A673 (cell line): ENCODE measurements at regions of chr4 and their contacts with region 1.

Region 1: GRCh38 chr4:168837922-168838321 is 172.1 kb downstream of the CBR4 start:
- DNase-seq: no peak
- H3K4me3 ChIP-seq: no peak overlapping the region
- H3K27ac ChIP-seq: no peak overlapping the region
- H3K4me1 ChIP-seq: peaks cover 10% of the 10 kb centered on the region
- H3K27me3 ChIP-seq: no peaks in the 10 kb centered on the region
- CTCF ChIP-seq: no peak

Region 2: GRCh38 chr4:168847771-168848511 is 10.0 kb after region 1 on chr4:
- CTCF ChIA-PET with region 1: no interaction called
- POLR2A ChIA-PET with region 1: interaction called, 13 read pairs
- intact Hi-C with region 1: no loop called
- DNase-seq: peak; percentile 29
- H3K4me3 ChIP-seq: peak overlapping the region; percentile 18
- H3K27ac ChIP-seq: peak overlapping the region; percentile 59
- H3K4me1 ChIP-seq: peaks cover 32% of the 10 kb centered on the region
- H3K27me3 ChIP-seq: no peaks in the 10 kb centered on the region
- CTCF ChIP-seq: no peak

Region 3: GRCh38 chr4:169133932-169134331 is 296.0 kb after region 1 on chr4:
- CTCF ChIA-PET with region 1: no interaction called
- POLR2A ChIA-PET with region 1: no interaction called
- intact Hi-C with region 1: no loop called
- DNase-seq: no peak
- H3K4me3 ChIP-seq: no peak overlapping the region
- H3K27ac ChIP-seq: no peak overlapping the region
- H3K4me1 ChIP-seq: peaks cover 10% of the 10 kb centered on the region
- H3K27me3 ChIP-seq: no peaks in the 10 kb centered on the region
- CTCF ChIP-seq: no peak